ENCODE measurements at regions of chr17 and their contacts with region 1.

Region 1: GRCh38 chr17:30970831-30971567 is at the start of gene RNF135:
- DNase-seq: peak in 1 of 2 donors; percentile 91
- H3K4me3 ChIP-seq: peak within 1 kb of the TSS; percentile 72 to 80
- H3K27ac ChIP-seq: peak within 1 kb of the TSS; percentile 97
- H3K4me1 ChIP-seq: peaks cover 14% of the 10 kb centered on the region
- H3K27me3 ChIP-seq: no peaks in the 10 kb centered on the region
- CTCF ChIP-seq: peak in 2 of 3 experiments; percentile 29 to 44
- POLR2A ChIP-seq: peak in 1 of 2 donors; percentile 42
- total RNA-seq, gene RNF135: 21.1 TPM

Region 2: DNA sequence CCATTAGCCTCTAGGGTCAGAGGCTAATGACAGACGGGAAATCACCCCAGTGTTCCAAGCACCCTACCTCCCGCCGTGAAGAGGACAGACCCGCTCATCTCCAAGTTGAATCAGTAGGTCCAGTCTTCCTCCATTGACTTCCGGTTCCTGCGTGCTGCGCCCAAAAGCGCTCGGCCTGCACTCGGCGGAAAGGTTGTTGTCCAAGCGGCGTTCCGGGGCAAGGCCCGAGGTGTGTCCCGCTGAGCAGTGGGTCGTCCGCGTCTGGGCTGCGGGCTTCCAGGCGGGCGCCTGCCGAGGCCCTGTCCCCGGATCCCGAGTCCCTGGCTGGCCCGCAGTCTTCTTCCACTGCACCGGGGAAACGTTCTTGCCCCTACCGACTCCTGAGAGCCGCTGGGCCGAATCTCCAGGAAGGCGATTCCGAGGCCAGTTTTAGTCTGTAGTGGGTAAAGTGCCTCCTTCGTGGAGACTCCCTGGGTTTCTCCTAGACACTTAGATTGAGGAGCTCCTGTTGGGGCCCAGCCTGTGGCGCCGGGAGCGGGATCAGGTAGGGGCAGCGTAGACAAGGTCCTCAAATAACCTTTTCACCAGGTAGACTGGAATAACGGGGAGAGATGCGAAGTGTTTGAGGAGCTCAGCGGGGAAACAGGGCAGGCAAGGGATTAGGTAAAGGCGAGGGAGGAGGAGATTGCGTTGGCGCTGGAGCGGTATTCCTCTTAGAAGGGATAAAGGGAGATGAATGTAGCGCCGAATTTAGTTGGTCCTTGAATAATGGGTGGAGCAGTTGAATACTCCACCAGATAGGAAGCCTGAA is 64.7 kb before region 1 on chr17 and contains the start of gene TEFM:
- intact Hi-C with region 1: loop called (anchors 2 kb)
- DNase-seq: peak in 1 of 2 donors; percentile 89
- H3K4me3 ChIP-seq: peak within 1 kb of the TSS; percentile 71 to 80
- H3K27ac ChIP-seq: peak within 1 kb of the TSS; percentile 67
- H3K4me1 ChIP-seq: peaks cover 26% of the 10 kb centered on the region
- H3K27me3 ChIP-seq: no peaks in the 10 kb centered on the region
- CTCF ChIP-seq: no peak
- POLR2A ChIP-seq: no peak
- total RNA-seq, gene TEFM: 5.6 TPM

Region 3: GRCh38 chr17:31008374-31009041 is 37.5 kb after region 1 on chr17:
- intact Hi-C with region 1: no loop called
- DNase-seq: no peak
- H3K4me3 ChIP-seq: peak overlapping the region; percentile 64 to 76
- H3K27ac ChIP-seq: peak overlapping the region; percentile 93
- H3K4me1 ChIP-seq: peaks cover 4% of the 10 kb centered on the region
- H3K27me3 ChIP-seq: no peaks in the 10 kb centered on the region
- CTCF ChIP-seq: no peak
- POLR2A ChIP-seq: no peak

Region 4: DNA sequence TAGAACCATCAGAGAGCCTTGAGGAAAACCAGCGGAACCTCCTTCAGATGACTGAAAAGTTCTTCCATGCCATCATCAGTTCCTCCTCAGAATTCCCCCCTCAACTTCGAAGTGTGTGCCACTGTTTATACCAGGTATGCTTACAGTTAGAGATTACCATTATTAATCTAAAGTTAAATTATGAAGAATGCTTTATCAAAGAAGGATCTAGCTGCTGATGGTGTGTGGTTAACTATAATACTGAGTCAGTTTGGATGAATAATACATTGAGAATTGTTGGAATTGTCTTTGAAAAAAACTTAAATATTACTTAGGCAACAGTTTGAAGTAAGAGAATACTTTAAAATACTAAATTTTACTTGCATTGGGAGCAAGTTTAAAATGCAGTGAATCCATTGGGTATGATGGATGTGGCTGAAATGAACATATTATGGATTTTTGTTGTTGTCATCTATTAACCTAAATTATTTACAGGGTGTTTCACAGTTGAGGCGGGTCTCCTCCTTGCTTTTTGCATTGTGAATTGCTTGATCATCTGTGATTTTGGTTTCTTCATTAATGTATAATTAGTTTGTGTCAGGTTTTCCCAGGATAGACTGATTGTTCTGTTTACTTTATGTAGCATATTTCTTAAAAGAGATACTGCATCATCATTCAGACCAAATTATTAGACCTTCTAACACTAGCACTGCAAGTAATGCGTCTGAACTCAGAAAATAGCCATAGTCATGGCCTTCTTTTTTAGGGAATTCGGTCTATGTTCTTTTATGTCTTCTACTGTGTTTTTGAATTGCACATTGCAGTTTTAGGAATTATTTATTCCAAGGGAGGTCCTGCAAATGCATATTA is 278.2 kb after region 1 on chr17:
- intact Hi-C with region 1: no loop called
- DNase-seq: no peak
- H3K4me3 ChIP-seq: no peak overlapping the region
- H3K27ac ChIP-seq: no peak overlapping the region
- H3K4me1 ChIP-seq: peaks cover 5% of the 10 kb centered on the region
- H3K27me3 ChIP-seq: no peaks in the 10 kb centered on the region
- CTCF ChIP-seq: no peak
- POLR2A ChIP-seq: no peak

Measured in vagina (tissue), 2 donors.